Mammary epithelial cell (primary cell): ENCODE measurements at regions of chr17 and their contacts with region 1.

Region 1: GRCh38 chr17:58172369-58173071 is 5.7 kb downstream of the OR4D2 start:
- DNase-seq: peak; percentile 35
- H3K4me3 ChIP-seq: no peak overlapping the region
- H3K27ac ChIP-seq: no peak overlapping the region
- H3K4me1 ChIP-seq: no peaks in the 10 kb centered on the region
- H3K27me3 ChIP-seq: no peaks in the 10 kb centered on the region
- CTCF ChIP-seq: peak; percentile 57 to 68

Region 2: GRCh38 chr17:58121925-58122324 is 50.6 kb before region 1 on chr17:
- CTCF ChIA-PET with region 1: no interaction called
- dilution Hi-C with region 1: no loop called
- in situ Hi-C with region 1: no loop called
- intact Hi-C with region 1: loop called (anchors 1 kb)
- DNase-seq: peak; percentile 20
- H3K4me3 ChIP-seq: no peak overlapping the region
- H3K27ac ChIP-seq: no peak overlapping the region
- H3K4me1 ChIP-seq: no peaks in the 10 kb centered on the region
- H3K27me3 ChIP-seq: peaks cover 1% of the 10 kb centered on the region
- CTCF ChIP-seq: peak; percentile 33 to 58

Region 3: DNA sequence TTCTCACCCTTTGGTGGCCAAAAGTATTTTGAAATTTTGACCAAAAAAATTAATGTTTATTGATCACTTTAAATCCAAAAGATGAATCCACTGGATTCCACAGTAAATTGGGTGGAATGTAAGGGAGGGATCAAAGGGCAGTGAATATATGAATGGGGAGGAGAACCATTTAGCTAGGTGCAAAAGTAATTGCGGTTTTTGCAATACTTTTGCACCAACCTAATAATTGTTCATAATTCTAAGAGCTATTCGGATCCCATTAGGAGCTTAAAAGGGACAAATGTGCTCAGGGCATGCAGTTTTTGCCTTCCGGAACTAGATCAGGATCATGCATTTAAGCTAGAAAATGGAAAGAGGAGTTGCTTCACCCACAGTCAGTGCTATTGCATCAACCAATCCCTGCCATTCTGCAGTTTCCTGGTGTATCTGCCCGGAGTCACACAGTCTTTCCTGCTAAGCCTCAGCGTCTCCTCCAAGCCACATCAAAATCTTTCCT is 65.7 kb after region 1 on chr17 and contains the start of gene LPO:
- CTCF ChIA-PET with region 1: no interaction called
- dilution Hi-C with region 1: loop called (anchors 5 kb)
- in situ Hi-C with region 1: no loop called
- intact Hi-C with region 1: no loop called
- DNase-seq: no peak
- H3K4me3 ChIP-seq: no peak within 1 kb of the TSS
- H3K27ac ChIP-seq: no peak within 1 kb of the TSS
- H3K4me1 ChIP-seq: no peaks in the 10 kb centered on the region
- H3K27me3 ChIP-seq: peaks cover 5% of the 10 kb centered on the region
- CTCF ChIP-seq: no peak
- total RNA-seq, gene LPO: not detected

Region 4: DNA sequence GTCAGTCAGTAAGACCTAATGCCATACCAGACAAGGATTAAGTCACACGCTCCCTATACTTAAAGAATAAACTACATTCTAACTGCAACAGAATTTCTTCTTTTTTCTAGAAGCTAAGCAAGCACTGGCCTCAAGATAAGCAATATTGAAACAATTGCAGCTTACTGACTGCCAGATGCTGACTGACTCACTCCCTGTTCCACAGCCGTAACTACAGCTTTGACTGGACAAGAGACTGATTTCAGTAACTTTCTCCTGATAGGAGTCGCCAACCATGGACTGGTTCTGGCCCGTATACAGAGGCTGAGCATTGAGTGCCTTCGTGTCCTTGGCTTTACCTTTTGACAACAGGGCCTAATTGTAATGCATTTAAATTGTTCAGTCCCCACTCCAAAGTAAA is 866.2 kb after region 1 on chr17:
- CTCF ChIA-PET with region 1: no interaction called
- dilution Hi-C with region 1: no loop called
- in situ Hi-C with region 1: no loop called
- intact Hi-C with region 1: no loop called
- DNase-seq: no peak
- H3K4me3 ChIP-seq: no peak overlapping the region
- H3K27ac ChIP-seq: no peak overlapping the region
- H3K4me1 ChIP-seq: no peaks in the 10 kb centered on the region
- H3K27me3 ChIP-seq: no peaks in the 10 kb centered on the region
- CTCF ChIP-seq: no peak